CD4-positive, alpha-beta memory T cell (primary cell): ENCODE measurements at regions of chr1 and their contacts with region 1.

Region 1: DNA sequence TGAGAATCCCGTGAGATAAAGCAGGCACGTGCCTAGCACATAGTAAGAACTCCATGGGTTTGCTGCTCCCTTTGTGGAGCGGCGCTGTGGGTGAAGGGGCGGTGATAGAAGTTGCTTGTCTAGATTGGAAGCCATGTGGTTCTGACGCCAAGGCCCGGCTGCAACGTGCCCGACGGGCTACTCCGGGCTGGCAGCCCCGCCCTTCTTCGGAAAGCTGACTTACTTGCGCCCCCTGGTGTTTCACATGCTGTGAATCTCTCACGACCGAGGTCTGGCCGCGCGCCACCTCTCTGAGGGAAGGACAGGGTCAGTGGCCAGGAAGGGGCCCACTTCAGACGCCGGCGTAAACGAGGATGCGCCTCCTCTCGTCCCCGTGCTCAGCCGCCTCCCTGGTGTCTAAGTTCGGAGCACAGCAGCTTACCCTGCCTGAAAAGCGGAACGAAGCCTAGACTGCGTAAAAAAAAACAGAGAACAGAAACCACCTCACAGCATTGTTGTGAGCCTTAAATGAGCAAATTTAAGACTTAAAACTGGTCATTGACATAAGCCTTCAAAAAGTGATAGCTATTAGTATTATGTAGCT is 42.6 kb upstream of the WNT2B start:
- DNase-seq: peak; percentile 79 to 82 (median 80)
- H3K4me3 ChIP-seq: peak overlapping the region in 1 of 2 donors; percentile 43
- H3K4me3 Mint-ChIP-seq: peak overlapping the region; percentile 74 to 91 (median 84)
- H3K27ac ChIP-seq: no peak overlapping the region
- H3K27ac Mint-ChIP-seq: peak overlapping the region in 5 of 7 donors; percentile 16 to 85 (median 51)
- H3K4me1 ChIP-seq: peaks cover 10% of the 10 kb centered on the region
- H3K4me1 Mint-ChIP-seq: peaks cover 4 to 12% (median 9%) of the 10 kb centered on the region in 4 donors
- H3K27me3 ChIP-seq: no peaks in the 10 kb centered on the region
- H3K27me3 Mint-ChIP-seq: peaks cover 8 to 10% of the 10 kb centered on the region in 2 donors

Region 2: DNA sequence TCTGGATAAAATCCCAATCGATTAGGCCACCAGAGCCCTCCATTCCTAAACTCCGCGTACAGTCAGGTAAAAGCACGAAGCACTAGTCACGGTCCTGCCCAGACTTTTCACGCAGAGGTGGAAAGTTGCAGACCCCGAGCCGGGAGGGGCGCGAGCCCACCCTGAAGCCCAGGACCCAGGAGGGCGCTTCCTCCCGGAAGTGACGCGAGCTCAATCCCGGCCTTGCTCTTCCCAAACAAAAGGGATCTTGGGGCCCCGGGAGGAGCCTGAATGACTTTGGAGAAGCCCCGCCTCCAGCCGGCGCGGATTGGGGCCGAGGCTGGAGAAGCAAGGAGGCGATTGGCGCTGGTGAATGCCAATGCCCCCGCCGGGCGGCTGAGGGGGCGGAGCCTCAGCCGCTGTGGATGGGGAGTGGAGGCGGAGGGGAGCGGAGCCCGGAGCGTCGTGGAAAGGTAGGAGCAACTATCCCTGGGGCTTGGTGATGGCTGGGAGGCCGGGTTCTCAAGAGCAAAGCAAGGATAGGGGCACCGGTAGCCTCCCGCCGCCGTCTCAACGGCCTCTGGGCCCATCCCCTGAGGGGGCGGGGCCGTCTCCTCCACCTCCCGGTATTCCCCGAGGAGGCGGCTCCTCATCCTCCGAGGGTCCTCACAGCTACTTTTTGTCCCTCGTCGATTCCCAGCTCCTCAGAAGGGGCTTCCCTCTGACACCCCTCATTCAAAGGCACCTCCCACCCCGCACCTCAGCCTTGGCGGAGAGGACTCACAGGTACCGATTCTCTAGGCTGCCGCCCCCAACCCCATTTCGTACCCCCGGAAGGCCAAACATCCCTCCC is 70.1 kb before region 1 on chr1 and contains the start of gene CTTNBP2NL:
- CTCF ChIA-PET with region 1: interaction called, 203 read pairs
- POLR2A ChIA-PET with region 1: no interaction called
- intact Hi-C with region 1: loop called (anchors 1 kb)
- DNase-seq: peak; percentile 66 to 76 (median 72)
- H3K4me3 ChIP-seq: peak within 1 kb of the TSS; percentile 74 to 89
- H3K4me3 Mint-ChIP-seq: peak within 1 kb of the TSS; percentile 92 to 96 (median 94)
- H3K27ac ChIP-seq: peak within 1 kb of the TSS; percentile 8
- H3K27ac Mint-ChIP-seq: peak within 1 kb of the TSS; percentile 3 to 89 (median 79)
- H3K4me1 ChIP-seq: peaks cover 17% of the 10 kb centered on the region
- H3K4me1 Mint-ChIP-seq: peaks cover 12 to 23% (median 16%) of the 10 kb centered on the region in 4 donors
- H3K27me3 ChIP-seq: no peaks in the 10 kb centered on the region
- H3K27me3 Mint-ChIP-seq: peaks cover 6 to 15% of the 10 kb centered on the region in 2 donors
- total RNA-seq, gene CTTNBP2NL: 0.47 to 0.84 TPM

Region 3: GRCh38 chr1:112410673-112411072 is 55.5 kb before region 1 on chr1:
- CTCF ChIA-PET with region 1: interaction called, 13 read pairs
- POLR2A ChIA-PET with region 1: no interaction called
- intact Hi-C with region 1: no loop called
- DNase-seq: no peak
- H3K4me3 ChIP-seq: no peak overlapping the region
- H3K4me3 Mint-ChIP-seq: no peak overlapping the region
- H3K27ac ChIP-seq: no peak overlapping the region
- H3K27ac Mint-ChIP-seq: no peak overlapping the region
- H3K4me1 ChIP-seq: no peaks in the 10 kb centered on the region
- H3K4me1 Mint-ChIP-seq: no peaks in the 10 kb centered on the region
- H3K27me3 ChIP-seq: no peaks in the 10 kb centered on the region
- H3K27me3 Mint-ChIP-seq: peaks cover 0 to 4% of the 10 kb centered on the region in 2 donors

Region 4: GRCh38 chr1:112477550-112477949 is 11.4 kb after region 1 on chr1:
- CTCF ChIA-PET with region 1: interaction called, 19 read pairs
- POLR2A ChIA-PET with region 1: no interaction called
- intact Hi-C with region 1: no loop called
- DNase-seq: no peak
- H3K4me3 ChIP-seq: no peak overlapping the region
- H3K4me3 Mint-ChIP-seq: no peak overlapping the region
- H3K27ac ChIP-seq: no peak overlapping the region
- H3K27ac Mint-ChIP-seq: no peak overlapping the region
- H3K4me1 ChIP-seq: no peaks in the 10 kb centered on the region
- H3K4me1 Mint-ChIP-seq: no peaks in the 10 kb centered on the region
- H3K27me3 ChIP-seq: no peaks in the 10 kb centered on the region
- H3K27me3 Mint-ChIP-seq: peaks cover 18 to 19% of the 10 kb centered on the region in 2 donors

Region 5: DNA sequence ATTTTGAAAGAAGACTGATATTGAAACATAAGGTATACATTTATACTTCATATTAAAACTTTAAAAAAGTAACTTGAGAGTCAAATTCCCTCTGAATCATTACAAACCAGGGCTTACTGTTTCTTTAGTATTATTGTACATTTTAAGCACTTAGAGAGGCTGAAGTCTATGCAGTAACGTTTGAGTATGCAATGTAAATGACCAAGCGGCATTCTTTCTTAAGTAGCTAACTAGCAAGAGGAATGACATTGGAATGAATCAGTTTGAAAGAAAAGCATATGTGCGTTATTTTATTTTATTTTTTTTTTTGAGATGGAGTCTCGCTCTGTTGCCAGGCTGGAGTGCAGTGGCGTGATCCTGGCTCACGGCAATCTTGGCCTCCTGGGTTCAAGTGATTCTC is 66.9 kb after region 1 on chr1:
- CTCF ChIA-PET with region 1: no interaction called
- POLR2A ChIA-PET with region 1: no interaction called
- intact Hi-C with region 1: no loop called
- DNase-seq: no peak
- H3K4me3 ChIP-seq: no peak overlapping the region
- H3K4me3 Mint-ChIP-seq: no peak overlapping the region
- H3K27ac ChIP-seq: no peak overlapping the region
- H3K27ac Mint-ChIP-seq: no peak overlapping the region
- H3K4me1 ChIP-seq: no peaks in the 10 kb centered on the region
- H3K4me1 Mint-ChIP-seq: no peaks in the 10 kb centered on the region
- H3K27me3 ChIP-seq: no peaks in the 10 kb centered on the region
- H3K27me3 Mint-ChIP-seq: no peaks in the 10 kb centered on the region

Region 6: DNA sequence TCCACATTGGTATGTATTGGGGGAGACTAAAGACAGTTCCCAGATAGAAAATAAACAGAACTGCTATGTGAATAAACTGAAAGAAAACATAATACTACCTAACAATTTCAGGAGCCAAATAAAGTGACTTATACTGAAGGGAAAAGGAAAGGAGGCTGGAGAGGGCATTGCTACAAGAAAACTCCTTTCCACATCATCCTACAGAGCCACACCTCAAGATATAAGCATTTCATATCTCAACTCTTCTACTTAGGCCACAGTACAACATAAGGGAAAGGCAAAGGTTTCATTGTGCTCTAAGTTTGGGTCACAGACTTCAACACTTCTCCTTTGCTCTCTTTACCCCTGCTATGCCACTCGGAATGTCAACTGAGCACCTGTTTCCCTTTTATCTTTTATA is 97.9 kb after region 1 on chr1:
- CTCF ChIA-PET with region 1: no interaction called
- POLR2A ChIA-PET with region 1: no interaction called
- intact Hi-C with region 1: no loop called
- DNase-seq: no peak
- H3K4me3 ChIP-seq: no peak overlapping the region
- H3K4me3 Mint-ChIP-seq: no peak overlapping the region
- H3K27ac ChIP-seq: no peak overlapping the region
- H3K27ac Mint-ChIP-seq: no peak overlapping the region
- H3K4me1 ChIP-seq: no peaks in the 10 kb centered on the region
- H3K4me1 Mint-ChIP-seq: peaks cover 0 to 1% (median 0%) of the 10 kb centered on the region in 4 donors
- H3K27me3 ChIP-seq: no peaks in the 10 kb centered on the region
- H3K27me3 Mint-ChIP-seq: no peaks in the 10 kb centered on the region

Region 7: GRCh38 chr1:112614460-112615065 is 148.4 kb after region 1 on chr1:
- CTCF ChIA-PET with region 1: interaction called, 4 read pairs
- POLR2A ChIA-PET with region 1: no interaction called
- intact Hi-C with region 1: loop called (anchors 1 kb)
- DNase-seq: peak in 4 of 5 donors; percentile 28 to 48 (median 34)
- H3K4me3 ChIP-seq: no peak overlapping the region
- H3K4me3 Mint-ChIP-seq: peak overlapping the region in 1 of 8 donors; percentile 78
- H3K27ac ChIP-seq: no peak overlapping the region
- H3K27ac Mint-ChIP-seq: peak overlapping the region in 5 of 7 donors; percentile 64 to 89 (median 86)
- H3K4me1 ChIP-seq: peaks cover 13% of the 10 kb centered on the region
- H3K4me1 Mint-ChIP-seq: peaks cover 9 to 32% (median 18%) of the 10 kb centered on the region in 4 donors
- H3K27me3 ChIP-seq: no peaks in the 10 kb centered on the region
- H3K27me3 Mint-ChIP-seq: no peaks in the 10 kb centered on the region

Region 8: GRCh38 chr1:112882271-112882744 is 416.1 kb after region 1 on chr1:
- CTCF ChIA-PET with region 1: no interaction called
- POLR2A ChIA-PET with region 1: no interaction called
- intact Hi-C with region 1: no loop called
- DNase-seq: no peak
- H3K4me3 ChIP-seq: no peak overlapping the region
- H3K4me3 Mint-ChIP-seq: no peak overlapping the region
- H3K27ac ChIP-seq: no peak overlapping the region
- H3K27ac Mint-ChIP-seq: no peak overlapping the region
- H3K4me1 ChIP-seq: no peaks in the 10 kb centered on the region
- H3K4me1 Mint-ChIP-seq: no peaks in the 10 kb centered on the region
- H3K27me3 ChIP-seq: no peaks in the 10 kb centered on the region
- H3K27me3 Mint-ChIP-seq: peaks cover 1 to 2% of the 10 kb centered on the region in 2 donors